H1 (cell line): ENCODE measurements at regions of chr2 and their contacts with region 1.

Region 1: DNA sequence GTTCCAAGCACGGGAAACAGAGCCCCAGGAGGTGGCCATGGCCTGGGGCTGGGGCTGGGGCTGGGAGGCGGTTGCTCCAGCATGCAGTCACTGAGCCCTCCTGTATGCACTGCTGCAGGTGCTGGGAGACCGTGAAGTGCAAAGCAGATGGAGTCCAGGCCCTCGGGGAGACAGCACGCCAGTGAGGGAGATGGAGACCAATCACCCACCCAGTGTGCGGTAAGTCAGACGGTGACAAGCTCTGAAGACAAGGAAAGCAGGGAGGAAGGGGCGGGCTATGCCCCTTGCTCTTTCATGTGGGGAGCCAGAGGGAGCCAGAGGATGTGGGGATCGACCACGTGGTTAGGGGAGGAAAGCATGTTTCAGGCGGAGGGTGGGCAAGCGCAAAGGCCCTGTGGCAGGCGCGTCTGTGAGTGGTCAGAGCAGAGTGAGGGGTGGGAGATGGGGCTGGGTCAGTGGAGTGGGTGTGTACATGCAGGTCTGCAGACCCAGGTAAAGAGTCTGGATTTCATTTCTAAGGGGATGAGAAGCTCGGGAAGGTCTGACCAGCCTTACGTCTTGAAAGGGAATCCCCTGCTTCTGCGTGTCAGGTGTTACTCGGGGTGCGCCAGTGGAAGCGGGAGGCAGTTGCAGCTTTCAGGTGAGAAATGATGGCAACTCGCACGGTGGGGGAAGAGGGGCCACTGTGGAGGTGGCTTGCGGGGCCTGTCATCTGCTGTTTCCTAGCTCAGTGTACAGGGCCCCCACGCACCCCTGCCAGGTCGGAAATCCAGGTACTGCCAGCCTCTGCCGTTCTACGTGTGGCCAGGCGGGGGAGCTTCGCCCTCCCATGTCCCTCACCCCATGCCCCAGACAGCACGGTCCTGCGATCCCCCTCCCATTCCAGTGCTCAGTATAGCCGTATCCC is 19.4 kb downstream of the RRM2 start:
- DNase-seq: peak in 1 of 2 experiments; percentile 77
- H3K4me3 ChIP-seq: no peak overlapping the region
- H3K27ac ChIP-seq: no peak overlapping the region
- H3K4me1 ChIP-seq: peaks cover 0 to 3% (median 0%) of the 10 kb centered on the region in 4 experiments; a peak in 1 of 7 replicates
- H3K27me3 ChIP-seq: 0 out of 7 replicates have a peak, but pooled peaks cover 0 to 3% (median 0%) of the 10 kb centered on the region in 4 experiments
- CTCF ChIP-seq: peak; percentile 64 to 80 (median 78)
- EP300 ChIP-seq: no peak
- POLR2A ChIP-seq: no peak
- RAD21 ChIP-seq: peak; percentile 64 to 65

Region 2: DNA sequence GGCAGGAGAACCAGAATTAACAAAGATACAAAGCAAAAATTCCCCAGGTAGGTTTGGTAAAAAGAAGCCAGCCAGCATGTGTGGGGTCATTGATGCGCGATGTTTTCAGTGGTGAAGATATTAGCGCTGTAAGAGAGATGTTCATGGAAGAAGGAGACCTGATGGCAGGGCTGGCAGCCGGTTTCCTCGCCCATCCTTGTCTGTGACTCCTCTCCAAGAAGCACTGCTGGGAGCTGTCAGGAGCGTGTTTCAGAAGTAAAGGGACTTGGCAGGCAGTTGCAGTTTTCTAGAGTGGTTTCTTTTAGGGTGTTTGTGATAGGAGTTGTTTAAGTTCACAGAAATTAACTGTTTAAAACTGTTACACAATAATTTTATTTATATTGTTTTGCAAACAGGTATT is 274.1 kb before region 1 on chr2:
- CTCF ChIA-PET with region 1: no interaction called
- POLR2A ChIA-PET with region 1: no interaction called
- DNase-seq: no peak
- H3K4me3 ChIP-seq: no peak overlapping the region
- H3K27ac ChIP-seq: no peak overlapping the region
- H3K4me1 ChIP-seq: no peaks in the 10 kb centered on the region
- H3K27me3 ChIP-seq: no peaks in the 10 kb centered on the region
- CTCF ChIP-seq: no peak
- EP300 ChIP-seq: no peak
- POLR2A ChIP-seq: no peak
- RAD21 ChIP-seq: no peak

Region 3: DNA sequence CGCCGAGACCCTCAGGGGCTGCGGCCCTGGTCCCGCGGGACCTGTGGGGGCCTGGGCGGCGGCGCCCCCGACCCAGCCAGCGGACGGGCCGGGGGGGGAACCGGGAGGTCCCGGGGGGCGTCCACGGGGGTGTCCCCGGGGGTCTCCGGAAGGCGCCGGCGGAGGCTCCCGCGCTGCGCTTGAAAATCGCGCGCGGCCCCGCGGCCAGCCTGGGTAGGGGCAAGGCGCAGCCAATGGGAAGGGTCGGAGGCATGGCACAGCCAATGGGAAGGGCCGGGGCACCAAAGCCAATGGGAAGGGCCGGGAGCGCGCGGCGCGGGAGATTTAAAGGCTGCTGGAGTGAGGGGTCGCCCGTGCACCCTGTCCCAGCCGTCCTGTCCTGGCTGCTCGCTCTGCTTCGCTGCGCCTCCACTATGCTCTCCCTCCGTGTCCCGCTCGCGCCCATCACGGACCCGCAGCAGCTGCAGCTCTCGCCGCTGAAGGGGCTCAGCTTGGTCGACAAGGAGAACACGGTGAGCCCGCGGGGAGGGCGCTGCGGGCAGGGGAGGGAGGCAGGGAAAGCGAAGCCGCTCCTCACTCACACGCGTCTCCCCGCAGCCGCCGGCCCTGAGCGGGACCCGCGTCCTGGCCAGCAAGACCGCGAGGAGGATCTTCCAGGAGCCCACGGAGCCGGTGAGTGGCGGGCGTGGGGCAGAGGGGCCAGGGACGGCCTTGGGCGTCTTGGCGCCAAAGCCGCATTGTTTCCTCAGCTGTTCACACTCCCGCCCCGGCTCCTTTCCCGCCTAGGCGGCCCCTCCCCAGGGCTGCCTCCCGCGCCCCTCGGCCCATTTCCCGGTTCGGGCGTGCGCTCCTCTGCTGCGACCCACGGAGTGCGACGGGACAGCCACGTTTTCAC is 19.4 kb before region 1 on chr2 and contains the start of gene RRM2:
- CTCF ChIA-PET with region 1: interaction called, 141 read pairs
- POLR2A ChIA-PET with region 1: interaction called, 87 read pairs
- DNase-seq: peak; percentile 71 to 96
- H3K4me3 ChIP-seq: peak within 1 kb of the TSS; percentile 85 to 96 (median 88)
- H3K27ac ChIP-seq: peak within 1 kb of the TSS; percentile 85
- H3K4me1 ChIP-seq: peaks cover 1 to 4% (median 4%) of the 10 kb centered on the region in 4 experiments; a peak in 5 of 7 replicates
- H3K27me3 ChIP-seq: no peaks in the 10 kb centered on the region
- CTCF ChIP-seq: no peak
- EP300 ChIP-seq: no peak
- POLR2A ChIP-seq: peak; percentile 97 to 98
- RAD21 ChIP-seq: no peak
- total RNA-seq, gene RRM2: 215 and 228 TPM in 2 replicates

Region 4: DNA sequence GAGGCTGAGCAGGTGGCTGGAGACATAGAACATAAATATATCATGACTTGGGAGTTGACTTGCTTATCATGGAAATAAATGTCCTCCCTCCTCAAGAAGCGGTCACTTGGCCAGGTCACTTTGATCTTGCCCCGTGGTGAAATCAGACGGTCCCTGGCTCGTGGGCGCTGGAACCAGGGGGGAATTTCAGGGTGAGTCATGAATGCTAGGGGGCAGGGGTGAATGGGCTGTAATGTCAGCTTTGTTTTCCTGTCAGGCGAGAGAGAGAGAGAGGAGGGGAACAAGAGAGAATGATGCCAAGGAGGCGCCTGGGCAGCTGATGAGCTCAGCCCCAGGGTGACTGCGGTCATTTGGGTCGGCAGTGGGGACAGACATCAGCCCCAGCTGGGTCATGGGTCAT is 28.3 kb after region 1 on chr2:
- CTCF ChIA-PET with region 1: interaction called, 169 read pairs
- POLR2A ChIA-PET with region 1: no interaction called
- DNase-seq: no peak
- H3K4me3 ChIP-seq: no peak overlapping the region
- H3K27ac ChIP-seq: no peak overlapping the region
- H3K4me1 ChIP-seq: peaks cover 0 to 4% (median 3%) of the 10 kb centered on the region in 4 experiments; a peak in 4 of 7 replicates
- H3K27me3 ChIP-seq: no peaks in the 10 kb centered on the region
- CTCF ChIP-seq: no peak
- EP300 ChIP-seq: no peak
- POLR2A ChIP-seq: no peak
- RAD21 ChIP-seq: no peak

Region 5: GRCh38 chr2:10267551-10268465 is 125.8 kb after region 1 on chr2:
- CTCF ChIA-PET with region 1: interaction called, 23 read pairs
- POLR2A ChIA-PET with region 1: no interaction called
- DNase-seq: no peak
- H3K4me3 ChIP-seq: no peak overlapping the region
- H3K27ac ChIP-seq: no peak overlapping the region
- H3K4me1 ChIP-seq: peaks cover 0 to 2% (median 0%) of the 10 kb centered on the region in 4 experiments; a peak in 1 of 7 replicates
- H3K27me3 ChIP-seq: no peaks in the 10 kb centered on the region
- CTCF ChIP-seq: peak; percentile 44 to 50 (median 49)
- EP300 ChIP-seq: no peak
- POLR2A ChIP-seq: no peak
- RAD21 ChIP-seq: peak; percentile 32 to 52; a peak in 3 of 4 replicates